SK-N-SH (cell line): ENCODE measurements at regions of chr17 and their contacts with region 1.

Region 1: GRCh38 chr17:58317421-58318064 is 11.1 kb downstream of the TSPOAP1 start:
- DNase-seq: peak; percentile 81
- H3K4me3 ChIP-seq: no peak overlapping the region
- H3K27ac ChIP-seq: no peak overlapping the region
- H3K4me1 ChIP-seq: no peaks in the 10 kb centered on the region
- H3K27me3 ChIP-seq: no peaks in the 10 kb centered on the region
- CTCF ChIP-seq: peak; percentile 74
- EP300 ChIP-seq: no peak
- RAD21 ChIP-seq: peak; percentile 83

Region 2: DNA sequence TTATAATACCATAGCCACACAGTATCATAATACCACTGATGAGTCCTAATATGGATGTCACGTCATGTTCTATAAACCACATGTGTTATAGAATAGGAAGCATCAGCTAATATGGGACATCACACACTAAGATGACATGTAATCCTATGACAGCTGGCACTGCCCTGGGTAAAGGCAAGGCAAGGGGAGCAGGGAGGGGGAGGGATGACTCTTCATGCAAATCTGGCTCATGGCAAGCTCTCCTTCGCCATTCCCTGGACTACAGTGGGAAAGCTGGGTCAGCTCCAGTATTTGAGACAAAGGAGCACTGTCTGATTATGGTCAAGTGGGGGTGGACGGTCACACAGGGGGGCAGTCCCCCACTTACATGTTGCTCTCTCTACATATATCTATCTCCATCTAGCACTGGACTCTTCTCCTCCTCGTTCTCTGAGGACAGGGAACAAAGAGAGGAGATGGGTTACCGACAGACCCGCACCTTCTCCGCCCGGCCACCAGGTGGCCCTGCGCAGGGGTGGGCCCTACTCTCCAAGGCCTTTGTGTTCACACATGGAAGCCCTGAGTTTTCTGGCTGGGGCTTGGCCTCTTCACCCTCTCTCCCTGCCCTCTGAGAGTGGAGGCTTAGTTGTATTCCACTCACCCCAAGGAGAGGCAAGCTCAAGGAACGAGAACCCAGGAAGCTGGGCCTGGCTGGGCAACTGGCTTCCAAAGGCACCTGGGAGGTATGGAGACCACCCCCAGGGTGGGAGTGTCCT is 13.4 kb before region 1 on chr17:
- CTCF ChIA-PET with region 1: interaction called, 29 read pairs
- POLR2A ChIA-PET with region 1: interaction called, 3 read pairs
- DNase-seq: peak; percentile 93
- H3K4me3 ChIP-seq: no peak overlapping the region
- H3K27ac ChIP-seq: no peak overlapping the region
- H3K4me1 ChIP-seq: peaks cover 0 to 3% of the 10 kb centered on the region in 2 experiments; a peak in 1 of 4 replicates
- H3K27me3 ChIP-seq: peaks cover 11% of the 10 kb centered on the region; the same call in 1 of the 2 replicates
- CTCF ChIP-seq: peak; percentile 77
- EP300 ChIP-seq: no peak
- RAD21 ChIP-seq: peak; percentile 61

Region 3: DNA sequence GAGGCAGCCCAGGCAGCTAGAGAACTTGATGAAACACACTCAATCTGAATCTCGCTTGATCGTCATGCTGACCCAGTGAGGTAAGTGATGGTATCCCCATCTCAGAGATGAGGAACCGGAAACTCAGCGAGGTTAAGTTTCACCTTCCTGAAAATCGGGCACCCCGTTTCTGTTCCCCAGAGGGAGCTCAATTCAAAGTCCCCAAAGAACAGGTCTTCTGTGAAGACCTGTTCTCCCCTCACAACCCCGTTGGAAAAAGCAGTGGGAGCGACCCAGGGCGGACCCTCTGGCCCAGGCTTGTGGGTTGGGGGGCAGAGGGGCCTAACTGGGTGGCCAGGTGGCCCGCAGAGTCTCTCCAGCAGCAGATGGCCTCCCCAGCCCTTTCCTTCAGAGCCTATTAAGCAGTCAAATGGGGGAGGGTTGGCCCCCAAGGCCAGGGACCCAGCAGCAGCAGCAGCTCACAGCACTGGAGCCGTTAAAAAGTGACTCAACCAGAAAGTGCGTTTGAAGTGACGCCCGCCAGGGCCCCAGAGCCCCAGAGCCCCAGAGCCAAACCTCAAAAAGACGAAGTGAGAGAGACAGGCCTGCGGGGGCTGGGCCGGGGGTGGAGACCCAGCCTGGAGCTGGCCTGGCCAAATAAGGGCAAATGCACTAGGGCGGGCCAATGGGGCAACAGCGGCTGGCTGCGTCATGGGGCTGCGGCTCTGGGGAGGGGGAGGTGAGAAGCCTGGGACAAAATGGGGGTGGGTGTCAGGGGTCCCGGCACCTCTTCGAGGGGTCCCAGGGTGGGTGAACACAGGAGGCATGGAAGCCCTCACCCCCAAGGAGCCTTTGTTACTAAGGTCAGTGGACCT is 20.3 kb after region 1 on chr17:
- CTCF ChIA-PET with region 1: interaction called, 14 read pairs
- POLR2A ChIA-PET with region 1: interaction called, 4 read pairs
- DNase-seq: no peak
- H3K4me3 ChIP-seq: no peak overlapping the region
- H3K27ac ChIP-seq: no peak overlapping the region
- H3K4me1 ChIP-seq: peaks cover 0 to 34% of the 10 kb centered on the region in 2 experiments; a peak in 1 of 4 replicates
- H3K27me3 ChIP-seq: no peaks in the 10 kb centered on the region
- CTCF ChIP-seq: no peak
- EP300 ChIP-seq: no peak
- RAD21 ChIP-seq: no peak

Region 4: DNA sequence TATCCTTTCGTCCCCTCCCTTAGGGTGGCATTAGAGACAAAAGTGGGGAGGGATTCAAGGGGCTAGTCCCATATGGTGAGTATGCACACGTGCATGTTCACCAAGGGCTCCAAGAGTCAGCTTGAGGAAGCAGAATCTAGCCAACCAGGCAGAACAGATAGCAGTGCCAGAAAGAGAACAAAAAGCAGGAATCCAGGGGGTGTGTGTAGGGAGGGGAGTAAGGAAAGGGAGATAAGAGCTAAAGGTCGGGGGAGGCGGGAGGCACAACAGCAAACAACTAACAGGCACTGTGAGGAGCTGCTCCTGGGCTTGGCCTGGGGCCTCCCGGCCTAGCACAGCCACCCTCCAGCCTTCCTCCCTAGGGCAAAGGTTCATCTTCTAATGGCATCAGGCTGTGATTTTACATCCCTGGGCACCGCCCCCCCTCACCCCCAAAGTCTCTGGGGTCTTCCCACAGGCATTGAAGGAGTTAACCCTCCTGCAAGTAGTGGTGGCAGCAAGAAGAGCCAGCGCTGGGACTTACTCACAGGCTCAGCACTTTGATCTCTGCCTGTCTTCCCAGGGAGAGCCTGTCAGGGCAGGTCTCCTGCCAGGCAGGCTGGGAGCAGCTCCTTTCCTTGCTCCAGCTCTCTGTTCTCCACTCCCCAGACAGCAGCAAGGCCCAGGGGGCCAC is 46.9 kb after region 1 on chr17:
- CTCF ChIA-PET with region 1: interaction called, 13 read pairs
- POLR2A ChIA-PET with region 1: no interaction called
- DNase-seq: no peak
- H3K4me3 ChIP-seq: no peak overlapping the region
- H3K27ac ChIP-seq: no peak overlapping the region
- H3K4me1 ChIP-seq: peaks cover 0 to 2% of the 10 kb centered on the region in 2 experiments; a peak in 1 of 4 replicates
- H3K27me3 ChIP-seq: peaks cover 32% of the 10 kb centered on the region; the same call in 1 of the 2 replicates
- CTCF ChIP-seq: no peak
- EP300 ChIP-seq: no peak
- RAD21 ChIP-seq: no peak

Region 5: DNA sequence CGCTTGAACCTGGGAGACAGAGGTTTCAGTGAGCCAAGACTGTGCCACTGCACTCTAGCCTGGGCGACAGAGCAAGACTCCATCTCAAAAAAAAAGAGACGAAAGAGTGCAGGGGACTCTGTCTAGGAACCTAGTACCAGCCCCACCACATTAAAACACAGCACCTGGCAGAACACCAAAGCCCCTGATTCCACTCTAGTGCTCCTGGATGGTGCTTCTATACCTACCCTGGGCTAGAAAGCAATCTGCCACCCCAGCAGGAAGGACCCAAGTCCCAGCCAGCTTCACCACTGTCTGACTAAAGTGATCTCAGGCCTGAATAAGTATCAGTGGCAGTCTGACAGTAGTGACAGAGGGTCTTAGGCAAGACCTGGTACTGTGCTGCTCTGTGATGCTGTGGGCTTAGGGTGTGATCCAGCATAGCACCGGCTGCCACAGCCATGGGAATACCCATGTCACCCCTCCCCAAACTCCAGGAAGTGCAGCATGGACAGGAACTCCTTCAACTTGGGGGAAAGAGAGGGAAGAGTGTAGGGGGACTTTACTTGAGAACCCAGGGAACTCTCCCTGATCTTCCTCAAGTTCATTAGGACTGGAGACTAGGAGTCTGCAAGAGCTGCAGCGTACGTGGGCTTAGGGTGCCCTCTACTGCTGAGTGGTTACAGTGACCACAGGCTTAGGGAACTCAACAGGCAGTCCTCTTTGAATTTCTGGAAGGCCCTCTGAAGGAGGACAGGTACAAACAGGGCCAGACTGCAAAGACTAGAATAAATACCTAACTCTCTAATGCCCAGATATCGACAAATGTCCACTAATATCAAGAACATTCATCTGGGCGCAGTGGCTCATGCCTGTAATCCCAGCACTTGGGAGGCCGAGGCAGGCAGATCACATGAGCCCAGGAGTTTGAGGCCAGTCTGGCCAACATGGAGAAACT is 129.8 kb after region 1 on chr17:
- CTCF ChIA-PET with region 1: interaction called, 22 read pairs
- POLR2A ChIA-PET with region 1: no interaction called
- DNase-seq: peak; percentile 78
- H3K4me3 ChIP-seq: peak overlapping the region in 1 of 2 experiments; percentile 31; a peak in 1 of 4 replicates
- H3K27ac ChIP-seq: no peak overlapping the region
- H3K4me1 ChIP-seq: no peaks in the 10 kb centered on the region
- H3K27me3 ChIP-seq: no peaks in the 10 kb centered on the region; the same call in 1 of the 2 replicates
- CTCF ChIP-seq: peak; percentile 88
- EP300 ChIP-seq: no peak
- RAD21 ChIP-seq: peak; percentile 98

Region 6: DNA sequence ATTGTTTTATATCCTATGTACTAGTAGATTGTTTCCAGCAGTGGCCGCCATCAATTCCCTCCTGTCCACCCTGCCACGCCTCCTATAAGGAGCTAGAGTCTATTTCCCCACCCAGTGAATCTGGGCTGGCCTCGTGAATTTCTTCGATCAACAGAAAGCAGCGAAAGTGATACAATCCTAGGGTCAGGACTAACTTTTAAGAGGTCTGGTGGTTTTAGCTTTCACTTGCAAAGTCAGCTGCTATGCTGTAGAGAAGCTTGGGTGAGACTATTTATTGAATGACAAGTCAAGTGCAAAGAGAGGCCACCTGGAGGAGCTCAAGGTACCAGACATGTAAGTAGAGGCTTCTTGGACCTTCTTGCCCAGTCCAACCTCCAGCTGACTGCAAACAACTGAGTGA is 277.8 kb after region 1 on chr17:
- CTCF ChIA-PET with region 1: no interaction called
- POLR2A ChIA-PET with region 1: no interaction called
- DNase-seq: no peak
- H3K4me3 ChIP-seq: no peak overlapping the region
- H3K27ac ChIP-seq: no peak overlapping the region
- H3K4me1 ChIP-seq: no peaks in the 10 kb centered on the region
- H3K27me3 ChIP-seq: no peaks in the 10 kb centered on the region
- CTCF ChIP-seq: no peak
- EP300 ChIP-seq: no peak
- RAD21 ChIP-seq: no peak